CD8-positive, alpha-beta memory T cell (primary cell): ENCODE measurements at regions of chr6 and their contacts with region 1.

Region 1: GRCh38 chr6:25369433-25370181 is 90.4 kb downstream of the CARMIL1 start:
- DNase-seq: peak in 1 of 5 donors; percentile 49
- H3K4me3 ChIP-seq: peak overlapping the region; percentile 42
- H3K4me3 Mint-ChIP-seq: peak overlapping the region in 6 of 7 donors; percentile 43 to 74 (median 68)
- H3K27ac ChIP-seq: no peak overlapping the region
- H3K27ac Mint-ChIP-seq: peak overlapping the region in 7 of 8 donors; percentile 6 to 97 (median 56)
- H3K4me1 ChIP-seq: peaks cover 48% of the 10 kb centered on the region
- H3K4me1 Mint-ChIP-seq: peaks cover 47 to 83% (median 70%) of the 10 kb centered on the region in 3 donors
- H3K27me3 ChIP-seq: no peaks in the 10 kb centered on the region
- H3K27me3 Mint-ChIP-seq: no peaks in the 10 kb centered on the region

Region 2: GRCh38 chr6:25586927-25587326 is 217.3 kb after region 1 on chr6:
- CTCF ChIA-PET with region 1: no interaction called
- POLR2A ChIA-PET with region 1: interaction called, 11 read pairs
- DNase-seq: no peak
- H3K4me3 ChIP-seq: no peak overlapping the region
- H3K4me3 Mint-ChIP-seq: no peak overlapping the region
- H3K27ac ChIP-seq: no peak overlapping the region
- H3K27ac Mint-ChIP-seq: no peak overlapping the region
- H3K4me1 ChIP-seq: no peaks in the 10 kb centered on the region
- H3K4me1 Mint-ChIP-seq: no peaks in the 10 kb centered on the region
- H3K27me3 ChIP-seq: no peaks in the 10 kb centered on the region
- H3K27me3 Mint-ChIP-seq: peaks cover 0 to 1% of the 10 kb centered on the region in 2 donors